ENCODE measurements at regions of chr18 and their contacts with region 1.

Region 1: GRCh38 chr18:36284671-36285295 is 12.7 kb upstream of the FHOD3 start:
- DNase-seq: no peak
- ATAC-seq: peak; percentile 72

Region 2: DNA sequence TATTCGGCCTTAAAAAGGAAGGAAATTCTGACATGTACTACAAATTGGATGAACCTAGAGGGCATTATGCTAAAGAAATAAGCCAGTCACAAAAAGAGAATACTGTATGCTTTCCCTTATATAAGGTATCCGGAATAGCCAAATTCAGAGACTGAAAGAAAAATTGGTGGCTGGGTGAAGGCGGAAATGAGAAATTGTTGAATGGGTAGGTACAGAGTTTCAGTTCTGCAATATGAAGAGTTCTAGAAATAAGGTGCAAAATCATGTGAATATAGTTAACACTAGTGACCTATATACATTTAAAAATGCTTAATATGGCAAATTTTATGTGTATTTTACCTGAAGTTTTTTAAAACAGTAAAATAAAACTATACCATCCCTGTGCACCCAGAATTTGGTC is 269.2 kb before region 1 on chr18:
- intact Hi-C with region 1: loop called (anchors 5 kb)
- DNase-seq: no peak
- ATAC-seq: no peak

Region 3: DNA sequence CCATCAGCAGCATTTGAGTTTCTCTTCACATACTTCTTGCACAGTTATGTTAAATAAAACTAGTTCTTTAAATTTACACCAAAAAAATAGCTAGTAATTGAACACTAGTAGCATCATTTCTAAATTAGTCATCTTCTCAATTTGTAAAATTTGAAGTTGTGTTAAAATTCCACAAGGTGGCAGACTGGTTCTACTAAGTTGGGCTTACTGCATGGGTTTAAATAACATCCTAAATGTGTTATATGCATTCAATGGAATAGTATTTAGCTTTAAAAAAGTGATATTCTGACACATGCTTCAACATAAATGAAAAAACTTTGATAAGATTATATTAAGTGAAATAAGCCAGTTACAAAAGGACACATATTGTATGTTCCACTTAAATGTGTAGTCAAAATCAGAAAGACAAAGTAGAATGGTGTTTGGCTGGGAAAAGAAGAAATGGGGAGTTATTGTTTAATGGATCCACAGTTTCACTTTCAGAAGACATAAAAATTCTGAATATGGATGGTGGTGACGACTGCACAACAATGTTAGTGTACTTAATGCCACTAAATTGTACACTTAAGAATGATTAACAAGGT is 188.8 kb before region 1 on chr18:
- intact Hi-C with region 1: loop called (anchors 5 kb)
- DNase-seq: no peak
- ATAC-seq: peak; percentile 43

Region 4: DNA sequence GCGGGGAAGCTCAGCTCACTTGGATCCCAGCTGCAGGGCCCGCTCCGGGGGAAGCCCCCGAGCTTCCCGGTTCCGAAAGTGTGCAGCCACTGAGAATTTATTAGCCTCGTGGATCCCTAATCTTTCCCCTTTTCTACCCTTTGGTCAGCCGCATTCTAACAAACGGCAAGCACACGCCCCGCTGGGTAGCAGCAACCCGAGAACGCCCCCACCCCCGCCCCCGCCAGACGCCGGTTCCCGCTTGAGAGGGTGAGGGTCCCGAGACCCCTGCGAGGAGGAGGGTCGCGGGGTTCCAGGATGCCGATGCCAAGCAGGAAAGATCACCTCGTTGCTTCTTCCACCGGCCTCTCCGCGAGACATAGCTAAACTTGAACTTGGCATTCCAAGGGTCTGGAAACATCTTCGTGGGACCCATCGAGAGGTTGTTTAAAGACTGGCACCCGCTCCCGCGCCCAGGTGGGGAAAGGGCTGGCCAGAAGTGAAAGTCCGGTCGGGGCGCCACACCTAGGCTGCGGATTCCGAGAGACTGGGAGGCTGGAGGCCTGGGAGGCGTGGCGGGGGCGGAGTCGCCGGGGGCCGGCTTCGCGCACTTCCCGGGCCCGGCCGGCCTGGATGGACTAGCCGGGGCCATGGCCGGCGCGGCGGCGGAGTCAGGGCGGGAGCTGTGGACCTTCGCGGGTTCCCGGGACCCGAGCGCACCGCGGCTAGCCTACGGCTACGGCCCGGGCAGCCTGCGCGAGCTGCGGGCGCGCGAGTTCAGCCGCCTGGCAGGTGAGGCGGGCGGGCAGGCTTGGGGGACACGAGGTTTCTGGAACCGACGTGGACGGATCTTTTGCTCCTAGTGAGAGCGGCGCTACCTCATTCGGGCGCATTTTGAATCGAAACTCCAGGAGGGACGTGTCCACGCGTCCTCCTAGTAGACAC is 97.6 kb before region 1 on chr18 and contains the start of gene MOCOS:
- intact Hi-C with region 1: loop called (anchors 10 kb)
- DNase-seq: peak; percentile 88
- ATAC-seq: peak; percentile 98
- total RNA-seq, gene MOCOS: 0.40 TPM

Measured in Right ventricle myocardium superior (tissue), 1 donor.